Right lobe of liver (tissue), 6 donors: ENCODE measurements at regions of chr5 and their contacts with region 1.

Region 1: DNA sequence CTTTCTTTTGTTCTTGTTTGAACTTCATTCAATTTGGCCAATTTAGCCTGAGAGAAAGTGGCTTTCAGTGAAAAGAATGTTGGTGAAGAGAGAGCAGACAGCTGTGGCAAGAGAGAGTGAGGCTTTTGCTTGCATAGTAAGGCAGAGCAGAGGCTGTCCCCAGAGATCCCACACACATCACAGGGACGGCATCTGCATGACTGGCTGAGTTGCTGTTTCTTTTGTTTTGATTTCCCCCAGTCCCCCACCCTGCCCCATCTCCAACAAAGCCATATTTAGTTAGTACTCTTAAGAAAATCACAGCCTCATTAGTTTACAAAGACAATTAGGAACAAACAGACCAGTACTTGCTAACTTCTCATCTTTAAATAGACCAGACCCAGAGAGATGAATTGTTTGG is 363.9 kb upstream of the SEMA6A start:
- DNase-seq: no peak
- ATAC-seq: no peak
- H3K4me3 ChIP-seq: no peak overlapping the region
- H3K27ac ChIP-seq: no peak overlapping the region
- H3K4me1 ChIP-seq: no peaks in the 10 kb centered on the region
- H3K27me3 ChIP-seq: no peaks in the 10 kb centered on the region
- CTCF ChIP-seq: no peak
- POLR2A ChIP-seq: no peak

Region 2: GRCh38 chr5:116583085-116583861 is 355.2 kb before region 1 on chr5:
- intact Hi-C with region 1: loop called (anchors 10 kb)
- DNase-seq: no peak
- ATAC-seq: no peak
- H3K4me3 ChIP-seq: no peak overlapping the region
- H3K27ac ChIP-seq: no peak overlapping the region
- H3K4me1 ChIP-seq: no peaks in the 10 kb centered on the region
- H3K27me3 ChIP-seq: no peaks in the 10 kb centered on the region
- CTCF ChIP-seq: no peak
- POLR2A ChIP-seq: no peak